Posterior cingulate gyrus (tissue), 11 donors: ENCODE measurements at regions of chr12 and their contacts with region 1.

Region 1: GRCh38 chr12:49842519-49843352 is at the start of gene BCDIN3D:
- DNase-seq: peak; percentile 83 to 99 (median 90)

Region 2: DNA sequence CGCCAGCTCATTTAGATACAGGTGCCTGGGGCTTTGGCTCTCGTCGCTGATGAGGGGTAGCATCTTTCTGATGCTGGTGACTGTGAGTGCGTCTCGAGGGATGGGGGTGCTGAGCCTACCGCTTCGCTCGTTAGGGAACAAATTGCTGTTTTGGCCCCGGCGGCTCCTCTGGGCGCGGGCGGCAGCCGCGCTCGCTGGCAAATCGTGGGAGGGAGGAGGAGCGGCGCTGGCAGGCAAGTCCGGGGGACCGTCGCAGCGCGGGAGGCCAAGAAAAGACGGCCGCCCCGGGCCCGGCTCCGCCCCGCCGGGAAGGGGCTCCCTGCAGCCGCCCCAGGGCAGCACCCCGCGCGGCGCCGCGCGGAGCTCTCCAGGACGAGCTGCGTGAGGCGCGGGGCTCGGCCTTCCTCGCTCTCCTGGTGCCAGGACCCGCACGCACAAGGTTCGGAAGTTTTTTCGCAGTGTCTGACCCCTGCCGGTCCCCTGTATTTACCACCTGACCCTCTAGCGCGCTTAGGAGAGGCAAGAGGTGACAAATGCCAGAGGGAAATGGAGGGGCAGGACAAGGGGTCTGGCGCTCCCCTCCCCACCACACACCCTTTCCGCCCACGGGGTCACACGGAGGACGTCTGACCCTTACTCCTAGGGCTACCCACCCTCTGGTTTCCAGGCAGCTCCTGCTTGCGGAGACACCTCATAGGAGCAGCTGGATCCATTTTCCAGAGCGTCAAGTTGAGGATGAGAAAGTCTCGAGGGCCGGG is 304.8 kb before region 1 on chr12:
- intact Hi-C with region 1: no loop called
- DNase-seq: peak in 8 of 10 donors; percentile 30 to 95 (median 70)

Region 3: GRCh38 chr12:49776413-49776812 is 66.3 kb before region 1 on chr12:
- intact Hi-C with region 1: loop called (anchors 1 kb)
- DNase-seq: peak; percentile 55 to 97 (median 74)

Region 4: DNA sequence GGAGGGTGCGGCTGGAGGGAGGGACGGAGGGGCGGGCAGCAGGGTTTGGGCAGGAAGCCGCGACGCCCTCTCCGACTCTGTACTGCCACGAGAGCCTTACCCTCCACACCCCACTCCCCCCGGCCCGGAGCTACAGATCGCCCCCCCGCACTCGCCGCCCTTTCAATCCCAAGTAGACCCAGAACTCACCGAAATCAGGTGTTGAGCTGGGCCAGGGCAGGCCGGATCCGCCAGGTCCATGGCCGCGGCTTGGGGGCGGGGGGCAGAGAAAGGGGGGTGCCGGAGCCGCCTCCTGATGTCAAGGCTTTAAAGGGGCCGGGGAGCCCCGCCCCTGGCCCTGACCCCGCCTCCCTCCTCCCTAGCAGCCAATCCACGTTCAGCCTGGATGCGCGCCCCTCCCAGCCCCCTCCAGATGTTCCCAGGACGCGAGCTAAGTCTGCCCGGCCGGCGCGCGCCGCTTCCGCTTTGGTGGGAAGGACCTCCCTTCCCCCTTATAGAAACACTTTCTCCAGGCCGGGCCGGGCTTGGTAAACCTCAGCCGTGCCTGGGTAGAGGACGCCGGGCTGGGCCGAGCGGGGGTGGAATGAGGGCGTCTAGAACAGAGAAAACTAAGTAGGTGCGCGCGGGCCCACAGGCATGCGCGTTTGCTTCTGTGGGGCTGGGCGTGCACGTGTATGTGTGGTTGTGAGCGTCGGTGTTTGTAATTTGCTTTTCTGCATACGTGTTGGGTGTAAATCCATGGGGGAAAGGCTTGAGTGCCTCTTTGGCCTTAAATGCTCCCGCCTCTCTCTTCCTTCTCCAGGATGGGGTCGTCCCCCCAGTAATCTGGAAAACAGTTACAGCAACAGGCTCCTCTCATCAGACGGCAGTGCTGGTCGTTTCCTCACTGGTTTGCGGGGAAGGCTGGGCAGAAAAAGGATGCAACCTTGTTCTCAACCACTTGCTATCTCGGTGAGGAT is 14.3 kb before region 1 on chr12 and contains the start of gene NCKAP5L:
- intact Hi-C with region 1: loop called (anchors 2 kb)
- DNase-seq: peak; percentile 91 to 99 (median 94)